Activated CD8-positive, alpha-beta T cell treated with anti-CD3 and anti-CD28 coated beads for 36 hours (primary cell): ENCODE measurements at regions of chr4 and their contacts with region 1.

Region 1: GRCh38 chr4:44678094-44679041 is at the start of gene GUF1:
- DNase-seq: peak; percentile 91
- ATAC-seq: peak; percentile 92
- H3K4me3 Mint-ChIP-seq: peak within 1 kb of the TSS; percentile 91
- H3K27ac Mint-ChIP-seq: peak within 1 kb of the TSS; percentile 92
- H3K4me1 Mint-ChIP-seq: peaks cover 27% of the 10 kb centered on the region
- H3K27me3 Mint-ChIP-seq: no peaks in the 10 kb centered on the region
- CTCF ChIP-seq: no peak
- total RNA-seq, gene GUF1: 33.6 to 40.0 TPM

Region 2: GRCh38 chr4:44638091-44638490 is 40.3 kb before region 1 on chr4:
- CTCF ChIA-PET with region 1: no interaction called
- POLR2A ChIA-PET with region 1: no interaction called
- intact Hi-C with region 1: no loop called
- DNase-seq: no peak
- ATAC-seq: no peak
- H3K4me3 Mint-ChIP-seq: no peak overlapping the region
- H3K27ac Mint-ChIP-seq: no peak overlapping the region
- H3K4me1 Mint-ChIP-seq: no peaks in the 10 kb centered on the region
- H3K27me3 Mint-ChIP-seq: peaks cover 7% of the 10 kb centered on the region
- CTCF ChIP-seq: no peak

Region 3: DNA sequence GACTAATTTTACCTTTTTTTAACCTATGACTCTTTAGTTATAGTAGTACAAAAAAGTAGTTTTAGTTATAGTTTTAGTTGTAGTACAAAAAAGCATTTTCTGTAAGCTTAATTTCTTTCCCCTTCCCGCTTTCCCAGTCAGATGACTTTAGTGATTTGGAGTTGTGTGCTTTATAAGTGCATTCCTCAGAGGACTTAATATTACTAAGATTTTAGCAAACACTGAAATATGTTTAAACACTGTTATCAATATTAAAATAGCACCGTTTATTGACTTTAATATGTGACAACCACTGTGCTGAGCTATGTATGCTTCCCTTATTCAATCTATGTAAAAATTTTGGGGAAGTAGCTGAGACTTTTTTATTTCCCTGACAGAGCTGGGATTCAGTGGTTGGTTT is 22.7 kb after region 1 on chr4:
- CTCF ChIA-PET with region 1: interaction called, 3 read pairs
- POLR2A ChIA-PET with region 1: interaction called, 10 read pairs
- intact Hi-C with region 1: no loop called
- DNase-seq: no peak
- ATAC-seq: no peak
- H3K4me3 Mint-ChIP-seq: no peak overlapping the region
- H3K27ac Mint-ChIP-seq: no peak overlapping the region
- H3K4me1 Mint-ChIP-seq: peaks cover 5% of the 10 kb centered on the region
- H3K27me3 Mint-ChIP-seq: no peaks in the 10 kb centered on the region
- CTCF ChIP-seq: no peak

Region 4: DNA sequence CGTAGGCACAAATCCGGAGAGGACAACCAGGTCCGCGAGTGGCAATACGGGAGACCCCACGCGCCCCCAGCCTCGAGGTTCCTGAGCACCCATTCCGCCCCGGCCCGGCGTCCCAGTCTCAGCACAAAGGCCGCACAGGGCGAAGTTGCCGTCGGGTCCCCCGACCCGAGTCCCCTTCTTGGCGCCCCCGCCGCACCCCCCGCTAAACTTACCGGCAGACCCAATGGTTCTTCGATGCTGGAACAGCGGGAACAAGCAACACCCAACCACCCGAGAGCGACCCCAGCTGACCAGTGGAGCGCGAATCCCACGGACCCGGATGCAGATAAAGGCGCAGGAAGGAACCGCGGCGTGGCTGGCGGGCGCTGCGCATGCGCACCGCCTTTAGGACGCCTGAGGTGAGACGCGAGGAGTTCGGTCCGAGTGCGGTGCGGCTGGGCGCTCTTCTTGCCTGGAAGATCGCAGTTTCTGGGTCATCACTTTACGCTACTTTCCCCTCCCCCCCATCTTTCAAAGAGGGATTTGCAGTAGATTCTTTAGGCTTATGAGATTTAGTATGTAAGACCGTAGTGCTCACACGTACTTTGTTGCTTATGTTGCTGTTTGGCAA is 48.0 kb after region 1 on chr4 and contains the start of gene GNPDA2:
- CTCF ChIA-PET with region 1: no interaction called
- POLR2A ChIA-PET with region 1: interaction called, 15 read pairs
- intact Hi-C with region 1: loop called (anchors 5 kb)
- DNase-seq: peak; percentile 87
- ATAC-seq: peak; percentile 92
- H3K4me3 Mint-ChIP-seq: peak within 1 kb of the TSS; percentile 91
- H3K27ac Mint-ChIP-seq: peak within 1 kb of the TSS; percentile 92
- H3K4me1 Mint-ChIP-seq: peaks cover 31% of the 10 kb centered on the region
- H3K27me3 Mint-ChIP-seq: peaks cover under 1% of the 10 kb centered on the region
- CTCF ChIP-seq: no peak
- total RNA-seq, gene GNPDA2: 13.1 to 14.6 TPM

Region 5: DNA sequence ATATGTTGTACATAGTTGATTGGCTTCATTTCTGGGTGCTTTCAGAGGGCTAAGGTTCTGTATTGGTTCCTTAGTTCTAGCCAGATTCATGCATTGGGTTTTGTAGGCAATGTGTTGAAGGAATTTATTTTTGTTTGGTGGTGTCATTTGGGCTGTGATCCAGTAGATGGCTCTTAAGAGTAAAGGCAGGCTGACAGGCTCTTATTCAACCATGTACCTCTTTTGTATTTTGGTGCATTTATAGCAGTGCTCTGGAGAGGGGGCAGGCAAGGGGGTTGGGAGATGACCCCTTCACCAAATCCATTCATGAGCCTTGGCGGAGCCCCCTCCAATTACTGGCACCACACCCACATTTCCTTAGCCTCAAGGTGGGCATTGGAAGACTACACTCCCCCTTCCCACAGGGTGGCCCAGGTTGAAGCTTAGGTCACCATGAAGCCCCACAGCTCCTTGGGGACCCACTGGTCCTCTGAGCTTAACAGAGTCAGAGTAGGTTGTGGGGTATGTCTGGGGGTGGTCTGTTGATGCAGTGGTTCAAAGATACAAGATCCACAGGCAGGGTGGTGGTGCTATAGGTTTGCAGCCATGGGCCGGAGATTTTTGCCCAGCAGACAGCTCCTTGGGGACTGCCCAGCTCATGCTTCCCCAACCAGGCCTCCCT is 191.0 kb after region 1 on chr4:
- CTCF ChIA-PET with region 1: no interaction called
- POLR2A ChIA-PET with region 1: no interaction called
- intact Hi-C with region 1: no loop called
- DNase-seq: no peak
- ATAC-seq: no peak
- H3K4me3 Mint-ChIP-seq: no peak overlapping the region
- H3K27ac Mint-ChIP-seq: no peak overlapping the region
- H3K4me1 Mint-ChIP-seq: no peaks in the 10 kb centered on the region
- H3K27me3 Mint-ChIP-seq: no peaks in the 10 kb centered on the region
- CTCF ChIP-seq: no peak